Naive thymus-derived CD4-positive, alpha-beta T cell (primary cell): ENCODE measurements at regions of chr5 and their contacts with region 1.

Region 1: DNA sequence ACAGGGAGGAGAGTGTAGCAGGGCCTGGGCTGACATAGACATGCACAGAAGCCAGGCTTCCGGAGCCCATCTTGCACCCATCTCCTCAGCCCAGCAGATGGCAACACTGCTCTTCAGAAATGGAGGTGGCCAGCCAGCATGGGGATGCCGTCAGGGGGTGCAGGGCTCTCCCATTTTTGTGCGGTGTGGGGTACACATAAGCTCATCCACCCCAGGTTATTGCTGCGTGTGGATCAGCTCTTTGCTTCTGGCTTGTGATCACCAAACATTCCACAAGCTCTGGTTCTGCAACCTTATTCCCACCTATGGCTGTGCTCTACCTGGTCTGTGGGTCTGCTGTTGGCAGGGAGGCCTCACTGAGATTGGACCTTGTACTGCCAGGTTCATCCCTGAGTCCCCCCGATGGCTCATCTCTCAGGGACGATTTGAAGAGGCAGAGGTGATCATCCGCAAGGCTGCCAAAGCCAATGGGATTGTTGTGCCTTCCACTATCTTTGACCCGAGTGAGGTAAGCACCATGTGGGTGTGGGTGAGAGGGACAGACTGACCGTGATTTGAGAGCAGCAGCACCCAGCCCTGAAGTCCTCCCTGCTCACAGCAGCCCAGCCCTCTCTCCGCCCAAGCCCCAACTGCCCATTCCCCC is 17.3 kb downstream of the SLC22A5 start:
- DNase-seq: peak; percentile 60 to 81 (median 74)
- ATAC-seq: peak; percentile 88
- H3K4me3 ChIP-seq: no peak overlapping the region
- H3K4me3 Mint-ChIP-seq: peak overlapping the region in 3 of 10 donors; percentile 7 to 47 (median 22)
- H3K27ac ChIP-seq: no peak overlapping the region
- H3K27ac Mint-ChIP-seq: peak overlapping the region; percentile 1 to 83 (median 41)
- H3K4me1 ChIP-seq: peaks cover 15 to 19% of the 10 kb centered on the region in 2 donors
- H3K4me1 Mint-ChIP-seq: peaks cover 20 to 55% (median 29%) of the 10 kb centered on the region in 7 donors
- H3K27me3 ChIP-seq: no peaks in the 10 kb centered on the region
- H3K27me3 Mint-ChIP-seq: no peaks in the 10 kb centered on the region

Region 2: DNA sequence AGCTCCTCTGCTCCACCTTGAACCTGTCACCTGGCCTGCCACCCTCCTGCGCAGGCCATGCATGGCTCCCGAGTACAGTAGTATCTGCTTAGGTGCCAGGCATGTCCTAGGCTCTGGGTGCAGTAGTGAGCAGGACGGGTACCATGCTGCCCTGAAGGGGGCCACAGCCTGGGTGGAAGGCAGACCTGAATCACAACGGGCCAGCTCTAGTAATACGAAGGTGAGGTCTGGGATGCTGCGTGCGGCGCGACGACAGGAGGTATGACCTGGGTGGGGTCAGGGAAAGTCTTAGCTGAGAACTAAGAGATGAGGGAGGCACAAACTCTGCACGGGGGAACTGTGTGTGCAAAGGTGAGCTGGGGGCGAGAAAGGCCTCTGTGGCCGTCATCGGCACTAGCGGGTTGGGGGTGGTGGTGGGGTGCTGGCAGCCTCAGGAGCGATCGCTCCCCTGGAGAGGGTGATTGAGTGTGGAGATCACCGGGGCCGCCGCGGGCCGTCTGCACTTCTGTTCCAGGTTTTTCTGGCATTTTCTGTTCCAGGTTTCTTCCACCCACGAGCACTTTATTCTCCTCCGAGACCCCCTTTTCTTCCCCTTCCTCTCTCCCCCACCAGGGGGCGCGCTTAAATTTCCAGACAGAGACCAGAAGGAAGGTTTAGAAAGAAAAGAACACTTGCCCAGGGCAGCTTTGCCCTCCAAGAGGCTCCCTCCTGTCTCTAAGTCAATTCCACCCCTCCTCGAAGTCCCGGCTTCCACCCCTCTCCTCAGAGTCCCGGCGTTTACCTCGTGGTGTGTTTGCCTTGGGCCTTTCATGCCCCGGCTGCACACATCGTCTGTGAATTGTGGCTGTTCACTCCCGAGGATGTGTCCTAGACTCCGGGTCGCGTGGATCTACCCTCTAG is 114.2 kb before region 1 on chr5:
- CTCF ChIA-PET with region 1: interaction called, 3 read pairs
- POLR2A ChIA-PET with region 1: no interaction called
- intact Hi-C with region 1: loop called in 1 of 2 experiments (anchors 5 kb)
- DNase-seq: peak; percentile 21 to 72 (median 49)
- ATAC-seq: peak; percentile 42
- H3K4me3 ChIP-seq: no peak overlapping the region
- H3K4me3 Mint-ChIP-seq: peak overlapping the region in 6 of 10 donors; percentile 25 to 80 (median 54)
- H3K27ac ChIP-seq: no peak overlapping the region
- H3K27ac Mint-ChIP-seq: peak overlapping the region in 1 of 9 donors; percentile 52
- H3K4me1 ChIP-seq: peaks cover 0 to 4% of the 10 kb centered on the region in 2 donors
- H3K4me1 Mint-ChIP-seq: peaks cover 0 to 16% (median 12%) of the 10 kb centered on the region in 7 donors
- H3K27me3 ChIP-seq: no peaks in the 10 kb centered on the region
- H3K27me3 Mint-ChIP-seq: peaks cover 10 to 31% (median 14%) of the 10 kb centered on the region in 5 donors

Region 3: GRCh38 chr5:132466433-132467286 is 79.9 kb after region 1 on chr5:
- CTCF ChIA-PET with region 1: interaction called, 11 read pairs
- POLR2A ChIA-PET with region 1: interaction called, 4 read pairs
- intact Hi-C with region 1: no loop called
- DNase-seq: peak in 8 of 9 donors; percentile 58 to 76 (median 72)
- ATAC-seq: peak; percentile 81
- H3K4me3 ChIP-seq: peak overlapping the region; percentile 57
- H3K4me3 Mint-ChIP-seq: peak overlapping the region; percentile 72 to 87 (median 78)
- H3K27ac ChIP-seq: peak overlapping the region; percentile 69
- H3K27ac Mint-ChIP-seq: peak overlapping the region; percentile 83 to 95 (median 94)
- H3K4me1 ChIP-seq: peaks cover 71 to 93% of the 10 kb centered on the region in 2 donors
- H3K4me1 Mint-ChIP-seq: peaks cover 58 to 98% (median 97%) of the 10 kb centered on the region in 7 donors
- H3K27me3 ChIP-seq: no peaks in the 10 kb centered on the region
- H3K27me3 Mint-ChIP-seq: no peaks in the 10 kb centered on the region

Region 4: DNA sequence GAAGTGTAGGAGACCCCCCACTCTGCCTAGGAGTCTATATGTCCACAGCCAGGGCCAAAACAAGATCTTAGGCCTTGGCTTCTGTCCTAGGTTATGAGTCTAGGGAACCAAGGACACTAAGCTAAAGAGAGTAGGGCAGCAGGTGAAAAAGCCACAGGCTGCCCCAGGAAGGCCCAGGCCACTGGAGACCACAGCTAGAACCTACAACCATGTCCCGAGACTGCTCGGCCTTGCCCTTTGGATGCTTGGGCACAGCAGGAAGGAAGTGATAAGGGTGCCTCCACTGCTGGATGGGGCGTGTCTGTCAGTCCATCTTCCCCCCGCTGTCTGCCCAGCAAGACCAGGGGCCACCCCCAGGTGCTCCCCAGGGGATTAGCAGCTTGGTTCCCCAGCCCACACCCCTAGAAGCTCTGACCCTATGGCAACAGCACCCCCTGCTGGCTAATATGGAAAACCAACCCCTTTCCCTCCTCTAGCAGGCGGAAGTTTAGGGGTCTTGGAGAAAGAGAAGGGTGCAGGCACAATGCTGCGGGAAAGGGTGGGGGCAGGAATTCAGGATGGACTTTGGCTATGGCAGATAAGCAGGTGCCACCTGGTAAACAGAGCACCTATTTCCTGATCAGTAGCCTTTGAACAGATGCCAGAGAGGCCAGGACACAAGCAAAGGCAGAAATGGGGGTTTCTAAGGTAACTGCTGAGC is 114.3 kb after region 1 on chr5:
- CTCF ChIA-PET with region 1: interaction called, 243 read pairs
- POLR2A ChIA-PET with region 1: interaction called, 122 read pairs
- intact Hi-C with region 1: loop called (anchors 1 kb)
- DNase-seq: peak; percentile 52 to 85 (median 76)
- ATAC-seq: peak; percentile 52
- H3K4me3 ChIP-seq: no peak overlapping the region
- H3K4me3 Mint-ChIP-seq: peak overlapping the region in 1 of 10 donors; percentile 48
- H3K27ac ChIP-seq: peak overlapping the region; percentile 99
- H3K27ac Mint-ChIP-seq: peak overlapping the region in 8 of 9 donors; percentile 26 to 98 (median 82)
- H3K4me1 ChIP-seq: peaks cover 12 to 21% of the 10 kb centered on the region in 2 donors
- H3K4me1 Mint-ChIP-seq: peaks cover 6 to 48% (median 31%) of the 10 kb centered on the region in 7 donors
- H3K27me3 ChIP-seq: no peaks in the 10 kb centered on the region
- H3K27me3 Mint-ChIP-seq: peaks cover 0 to 5% (median 0%) of the 10 kb centered on the region in 5 donors

Region 5: GRCh38 chr5:132820162-132820754 is 433.5 kb after region 1 on chr5:
- CTCF ChIA-PET with region 1: interaction called, 15 read pairs
- POLR2A ChIA-PET with region 1: no interaction called
- intact Hi-C with region 1: loop called (anchors 1 kb)
- DNase-seq: peak; percentile 60 to 86 (median 75)
- ATAC-seq: peak; percentile 93
- H3K4me3 ChIP-seq: peak overlapping the region; percentile 34
- H3K4me3 Mint-ChIP-seq: peak overlapping the region; percentile 5 to 86 (median 72)
- H3K27ac ChIP-seq: no peak overlapping the region
- H3K27ac Mint-ChIP-seq: peak overlapping the region in 2 of 9 donors; percentile 16 to 33
- H3K4me1 ChIP-seq: peaks cover 0 to 6% of the 10 kb centered on the region in 2 donors
- H3K4me1 Mint-ChIP-seq: peaks cover 6 to 18% (median 10%) of the 10 kb centered on the region in 7 donors
- H3K27me3 ChIP-seq: peaks cover 3 to 14% of the 10 kb centered on the region in 2 donors
- H3K27me3 Mint-ChIP-seq: peaks cover 13 to 51% (median 23%) of the 10 kb centered on the region in 5 donors

Region 6: GRCh38 chr5:133051580-133052332 is 665.0 kb after region 1 on chr5 and contains the start of gene HSPA4:
- CTCF ChIA-PET with region 1: no interaction called
- POLR2A ChIA-PET with region 1: no interaction called
- intact Hi-C with region 1: loop called in 1 of 2 experiments (anchors 5 kb)
- DNase-seq: peak; percentile 86 to 99 (median 98)
- ATAC-seq: peak; percentile 91
- H3K4me3 ChIP-seq: peak within 1 kb of the TSS; percentile 92
- H3K4me3 Mint-ChIP-seq: peak within 1 kb of the TSS; percentile 91 to 99 (median 98)
- H3K27ac ChIP-seq: peak within 1 kb of the TSS; percentile 98
- H3K27ac Mint-ChIP-seq: peak within 1 kb of the TSS; percentile 99 to 100 (median 100)
- H3K4me1 ChIP-seq: peaks cover 17 to 19% of the 10 kb centered on the region in 2 donors
- H3K4me1 Mint-ChIP-seq: peaks cover 31 to 70% (median 52%) of the 10 kb centered on the region in 7 donors
- H3K27me3 ChIP-seq: no peaks in the 10 kb centered on the region
- H3K27me3 Mint-ChIP-seq: no peaks in the 10 kb centered on the region
- total RNA-seq, gene HSPA4: 42.1 to 103 (median 50.0) TPM